Mammary epithelial cell (primary cell): ENCODE measurements at regions of chr17 and their contacts with region 1.

Region 1: GRCh38 chr17:48131216-48131824 is 23.8 kb downstream of the SNX11 start:
- DNase-seq: peak; percentile 46
- H3K4me3 ChIP-seq: no peak overlapping the region
- H3K27ac ChIP-seq: no peak overlapping the region
- H3K4me1 ChIP-seq: peaks cover 18% of the 10 kb centered on the region
- H3K27me3 ChIP-seq: no peaks in the 10 kb centered on the region
- CTCF ChIP-seq: peak; percentile 84 to 87

Region 2: DNA sequence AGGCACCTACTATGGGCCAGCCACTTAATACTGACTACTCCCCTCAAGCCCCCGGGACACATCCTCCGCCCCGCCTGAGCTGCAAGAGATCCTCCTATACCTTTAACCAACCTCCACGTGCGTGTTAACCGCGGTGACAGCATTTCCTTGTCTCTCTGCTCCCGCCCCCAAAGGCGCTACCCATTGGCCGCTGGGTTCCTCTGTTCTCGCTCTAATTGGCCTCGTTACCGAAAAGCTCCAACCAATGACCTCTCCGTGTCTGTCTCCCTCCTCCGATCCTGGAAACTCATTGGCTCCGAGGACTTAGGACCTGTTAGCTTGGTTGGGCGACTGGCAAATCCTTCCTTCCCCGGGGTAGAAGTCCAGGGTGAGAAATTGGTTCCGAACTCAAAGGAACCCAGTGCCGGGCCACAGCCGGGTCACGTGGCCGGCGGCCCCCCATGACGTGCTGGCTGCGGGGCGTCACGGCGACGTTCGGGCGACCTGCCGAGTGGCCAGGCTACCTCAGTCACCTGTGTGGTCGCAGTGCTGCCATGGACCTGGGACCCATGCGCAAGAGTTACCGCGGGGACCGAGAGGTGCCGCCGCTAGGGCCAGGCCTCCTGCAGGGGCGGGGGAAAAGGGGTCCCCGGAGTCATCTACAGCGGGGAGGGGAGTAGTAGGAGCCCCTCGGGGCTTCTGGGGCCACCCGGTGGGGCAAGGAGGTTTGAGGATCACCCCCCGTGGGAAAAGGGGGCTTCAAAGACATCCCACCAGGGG is 189.9 kb before region 1 on chr17 and contains the start of gene PNPO:
- CTCF ChIA-PET with region 1: no interaction called
- dilution Hi-C with region 1: no loop called
- in situ Hi-C with region 1: no loop called
- intact Hi-C with region 1: loop called (anchors 10 kb)
- DNase-seq: peak; percentile 99
- H3K4me3 ChIP-seq: peak within 1 kb of the TSS; percentile 65 to 78 (median 67)
- H3K27ac ChIP-seq: peak within 1 kb of the TSS; percentile 58
- H3K4me1 ChIP-seq: peaks cover 19% of the 10 kb centered on the region
- H3K27me3 ChIP-seq: no peaks in the 10 kb centered on the region
- CTCF ChIP-seq: peak in 1 of 2 donors; percentile 23
- total RNA-seq, gene PNPO: 63.5 to 89.5 TPM

Region 3: DNA sequence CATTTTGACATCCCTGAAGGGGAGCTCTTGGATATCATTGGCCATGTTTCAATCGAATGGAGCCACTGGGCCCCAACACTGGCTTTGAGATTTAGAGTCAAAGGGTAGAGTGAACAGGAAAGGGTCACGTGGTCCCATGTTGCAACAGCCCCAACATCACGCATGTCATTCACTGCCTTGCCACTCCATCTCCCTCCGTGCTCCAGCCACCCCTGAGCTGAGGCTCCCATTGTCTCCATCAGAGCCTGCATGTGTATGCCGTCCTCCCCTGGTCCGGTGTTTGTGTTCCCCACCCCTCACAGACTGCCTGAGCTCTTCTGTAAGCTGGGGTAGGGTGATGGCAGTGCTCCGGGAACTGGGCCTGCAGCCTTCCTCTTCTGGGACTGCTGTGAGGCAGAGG is 71.1 kb before region 1 on chr17:
- CTCF ChIA-PET with region 1: no interaction called
- dilution Hi-C with region 1: loop called (anchors 5 kb)
- in situ Hi-C with region 1: no loop called
- intact Hi-C with region 1: no loop called
- DNase-seq: no peak
- H3K4me3 ChIP-seq: no peak overlapping the region
- H3K27ac ChIP-seq: no peak overlapping the region
- H3K4me1 ChIP-seq: peaks cover 12% of the 10 kb centered on the region
- H3K27me3 ChIP-seq: no peaks in the 10 kb centered on the region
- CTCF ChIP-seq: no peak

Region 4: GRCh38 chr17:48084932-48085444 is 46.3 kb before region 1 on chr17:
- CTCF ChIA-PET with region 1: interaction called, 12 read pairs
- dilution Hi-C with region 1: no loop called
- in situ Hi-C with region 1: loop called (anchors 5 kb)
- intact Hi-C with region 1: loop called (anchors 1 kb)
- DNase-seq: no peak
- H3K4me3 ChIP-seq: no peak overlapping the region
- H3K27ac ChIP-seq: no peak overlapping the region
- H3K4me1 ChIP-seq: no peaks in the 10 kb centered on the region
- H3K27me3 ChIP-seq: no peaks in the 10 kb centered on the region
- CTCF ChIP-seq: no peak

Region 5: GRCh38 chr17:48107168-48108132 is 23.9 kb before region 1 on chr17 and contains the start of gene SNX11:
- CTCF ChIA-PET with region 1: no interaction called
- dilution Hi-C with region 1: no loop called
- in situ Hi-C with region 1: no loop called
- intact Hi-C with region 1: loop called (anchors 1 kb)
- DNase-seq: peak; percentile 92
- H3K4me3 ChIP-seq: peak within 1 kb of the TSS; percentile 65 to 91 (median 71)
- H3K27ac ChIP-seq: peak within 1 kb of the TSS; percentile 81
- H3K4me1 ChIP-seq: peaks cover 7% of the 10 kb centered on the region
- H3K27me3 ChIP-seq: no peaks in the 10 kb centered on the region
- CTCF ChIP-seq: peak in 1 of 2 donors; percentile 28
- total RNA-seq, gene SNX11: 20.2 to 25.8 TPM